HCT116 (cell line): ENCODE measurements at regions of chr16 and their contacts with region 1.

Region 1: GRCh38 chr16:12340151-12340733 is 363.7 kb downstream of the SNX29 start:
- DNase-seq: peak; percentile 55
- ATAC-seq: peak; percentile 73
- H3K4me3 ChIP-seq: no peak overlapping the region
- H3K27ac ChIP-seq: no peak overlapping the region
- H3K4me1 ChIP-seq: peaks cover 14 to 27% of the 10 kb centered on the region in 2 experiments
- H3K27me3 ChIP-seq: no peaks in the 10 kb centered on the region
- CTCF ChIP-seq: peak; percentile 57 to 77 (median 76); a peak in 5 of 6 replicates
- POLR2A ChIP-seq: no peak
- RAD21 ChIP-seq: peak; percentile 76

Region 2: DNA sequence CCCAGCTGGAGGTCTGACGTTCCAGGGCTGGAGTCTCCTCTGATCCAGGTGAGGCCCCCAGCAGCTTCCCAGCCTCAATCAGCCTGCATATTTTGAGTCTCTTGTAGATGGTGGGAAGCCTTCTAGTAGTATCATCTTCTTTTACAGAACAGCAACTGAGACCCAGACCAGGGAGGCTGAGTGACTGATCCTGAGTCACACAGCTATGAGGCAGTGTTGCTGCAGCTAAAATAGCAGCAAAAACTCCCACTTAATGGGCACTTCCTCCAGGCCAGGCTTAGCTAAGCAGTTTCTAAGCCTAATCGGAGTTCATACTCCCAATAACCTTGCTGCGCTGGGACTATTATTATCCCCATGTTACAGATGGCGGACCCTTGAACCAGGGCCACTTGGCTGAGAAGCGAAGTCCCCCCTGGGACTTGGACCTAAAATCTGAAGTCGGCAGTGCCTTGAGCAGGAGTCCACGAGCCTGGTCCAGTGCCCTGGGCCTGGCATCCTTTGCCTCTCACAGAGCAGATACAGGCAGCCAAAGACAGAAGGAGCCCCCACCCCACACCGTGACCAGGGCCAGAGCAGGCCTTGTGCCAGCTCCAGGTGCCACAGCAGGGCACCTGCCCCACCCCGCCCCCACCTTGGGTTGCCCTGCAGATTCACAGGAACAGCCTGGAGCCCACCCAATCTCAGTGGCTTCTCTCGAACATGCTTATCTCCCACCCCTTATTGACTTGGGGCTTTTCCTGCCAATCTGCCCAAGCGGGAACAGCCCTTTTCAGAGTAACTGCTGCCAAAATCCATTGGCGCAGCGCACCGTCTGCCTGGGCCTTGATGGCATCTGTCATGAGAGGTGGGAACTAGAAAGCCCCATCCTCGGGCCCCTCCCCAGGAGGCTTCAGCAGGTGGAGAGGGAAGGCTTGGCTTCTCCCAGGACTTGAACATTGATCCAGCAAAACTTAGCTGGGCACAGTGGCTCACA is 1149.4 kb before region 1 on chr16:
- CTCF ChIA-PET with region 1: no interaction called
- POLR2A ChIA-PET with region 1: no interaction called
- RAD21 ChIA-PET with region 1: no interaction called
- intact Hi-C with region 1: no loop called
- DNase-seq: no peak
- ATAC-seq: no peak
- H3K4me3 ChIP-seq: no peak overlapping the region
- H3K27ac ChIP-seq: no peak overlapping the region
- H3K4me1 ChIP-seq: peaks cover 5 to 28% of the 10 kb centered on the region in 2 experiments
- H3K27me3 ChIP-seq: no peaks in the 10 kb centered on the region
- CTCF ChIP-seq: no peak
- POLR2A ChIP-seq: no peak
- RAD21 ChIP-seq: no peak

Region 3: DNA sequence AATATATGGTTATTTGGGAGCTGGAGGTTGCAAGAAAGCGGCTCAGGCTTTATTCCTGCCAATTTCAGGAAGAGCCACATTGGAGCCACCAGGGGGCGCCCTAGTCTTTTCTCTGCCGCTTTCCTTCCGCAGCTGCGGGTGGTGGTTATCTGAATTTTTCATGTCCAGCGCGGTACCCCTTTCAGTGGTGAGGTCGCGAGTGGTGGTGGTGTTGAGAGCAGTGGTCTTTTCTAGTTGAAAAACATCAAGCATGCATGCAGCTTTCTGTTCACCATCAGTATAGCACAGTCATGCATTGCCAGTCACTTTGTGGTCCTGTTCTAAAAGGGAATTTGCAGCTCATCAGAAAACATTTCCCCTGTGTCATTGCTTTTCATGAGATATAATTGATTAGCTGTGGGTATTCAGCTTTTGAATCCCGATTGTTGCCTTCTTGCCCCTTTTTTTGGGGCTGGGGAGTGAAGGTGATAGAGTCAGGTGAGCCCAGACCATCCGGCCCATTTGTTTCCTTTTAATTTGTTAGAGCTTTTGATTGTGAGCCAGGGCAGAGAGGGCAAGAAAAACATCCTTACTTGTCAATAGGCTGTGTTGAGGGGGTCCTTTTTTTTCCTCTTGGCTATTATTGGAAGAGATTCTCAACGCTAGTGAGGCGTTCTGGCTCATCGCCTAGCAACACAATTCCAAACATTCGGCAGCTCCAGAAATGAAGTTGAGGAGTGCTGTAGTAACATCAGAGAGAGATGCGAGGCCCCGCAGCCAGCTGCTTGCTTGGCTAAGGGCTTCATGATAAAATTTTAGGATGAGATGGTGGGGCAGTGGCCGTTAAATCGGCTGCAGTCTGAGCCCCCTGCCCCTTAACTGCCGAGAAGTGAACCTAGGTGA is 244.7 kb before region 1 on chr16:
- CTCF ChIA-PET with region 1: interaction called, 9 read pairs
- POLR2A ChIA-PET with region 1: no interaction called
- RAD21 ChIA-PET with region 1: no interaction called
- intact Hi-C with region 1: loop called (anchors 10 kb)
- DNase-seq: peak; percentile 22
- ATAC-seq: peak; percentile 78
- H3K4me3 ChIP-seq: no peak overlapping the region
- H3K27ac ChIP-seq: no peak overlapping the region
- H3K4me1 ChIP-seq: peaks cover 11 to 13% of the 10 kb centered on the region in 2 experiments; a peak in 3 of 4 replicates
- H3K27me3 ChIP-seq: no peaks in the 10 kb centered on the region; the same call in 1 of the 2 replicates
- CTCF ChIP-seq: peak; percentile 69 to 92 (median 85); a peak in 5 of 6 replicates
- POLR2A ChIP-seq: no peak
- RAD21 ChIP-seq: peak; percentile 80

Region 4: GRCh38 chr16:12303653-12304052 is 36.6 kb before region 1 on chr16:
- CTCF ChIA-PET with region 1: no interaction called
- POLR2A ChIA-PET with region 1: no interaction called
- RAD21 ChIA-PET with region 1: no interaction called
- intact Hi-C with region 1: no loop called
- DNase-seq: no peak
- ATAC-seq: no peak
- H3K4me3 ChIP-seq: no peak overlapping the region
- H3K27ac ChIP-seq: no peak overlapping the region
- H3K4me1 ChIP-seq: no peaks in the 10 kb centered on the region
- H3K27me3 ChIP-seq: no peaks in the 10 kb centered on the region
- CTCF ChIP-seq: no peak
- POLR2A ChIP-seq: no peak
- RAD21 ChIP-seq: no peak

Region 5: GRCh38 chr16:12406926-12407690 is 66.9 kb after region 1 on chr16:
- CTCF ChIA-PET with region 1: no interaction called
- POLR2A ChIA-PET with region 1: no interaction called
- RAD21 ChIA-PET with region 1: no interaction called
- intact Hi-C with region 1: no loop called
- DNase-seq: no peak
- ATAC-seq: no peak
- H3K4me3 ChIP-seq: no peak overlapping the region
- H3K27ac ChIP-seq: no peak overlapping the region
- H3K4me1 ChIP-seq: peaks cover 7 to 10% of the 10 kb centered on the region in 2 experiments; a peak in 3 of 4 replicates
- H3K27me3 ChIP-seq: no peaks in the 10 kb centered on the region
- CTCF ChIP-seq: no peak
- POLR2A ChIP-seq: no peak
- RAD21 ChIP-seq: no peak

Region 6: DNA sequence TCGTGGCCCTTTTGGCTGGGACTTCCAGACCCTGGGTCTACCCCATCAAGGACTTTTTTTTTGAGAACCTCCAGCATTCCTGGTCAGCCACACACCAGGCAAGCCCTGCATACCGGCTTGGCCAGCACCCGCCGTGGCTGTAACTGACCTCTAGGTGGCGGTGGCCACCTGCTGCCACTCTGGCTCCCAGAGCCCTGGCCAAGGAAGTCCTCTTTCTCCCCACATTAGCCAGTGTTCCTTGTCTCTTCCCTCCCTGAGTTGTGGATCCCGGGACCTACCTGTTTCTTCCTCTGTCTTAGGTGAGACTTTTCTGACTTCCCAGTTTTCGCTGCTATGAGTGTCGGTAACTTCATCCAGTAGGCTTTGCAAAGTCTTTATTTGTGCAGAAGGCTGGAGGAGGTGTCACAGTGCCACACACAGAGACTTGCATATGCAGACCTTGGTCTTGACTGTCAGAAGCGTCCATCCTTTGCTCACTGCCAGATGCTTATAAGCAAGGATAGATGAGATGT is 115.1 kb after region 1 on chr16:
- CTCF ChIA-PET with region 1: no interaction called
- POLR2A ChIA-PET with region 1: no interaction called
- RAD21 ChIA-PET with region 1: no interaction called
- intact Hi-C with region 1: loop called (anchors 10 kb)
- DNase-seq: peak; percentile 6
- ATAC-seq: peak; percentile 99
- H3K4me3 ChIP-seq: no peak overlapping the region
- H3K27ac ChIP-seq: no peak overlapping the region
- H3K4me1 ChIP-seq: no peaks in the 10 kb centered on the region
- H3K27me3 ChIP-seq: no peaks in the 10 kb centered on the region
- CTCF ChIP-seq: peak; percentile 65 to 93 (median 87); a peak in 5 of 6 replicates
- POLR2A ChIP-seq: no peak
- RAD21 ChIP-seq: peak; percentile 85

Region 7: DNA sequence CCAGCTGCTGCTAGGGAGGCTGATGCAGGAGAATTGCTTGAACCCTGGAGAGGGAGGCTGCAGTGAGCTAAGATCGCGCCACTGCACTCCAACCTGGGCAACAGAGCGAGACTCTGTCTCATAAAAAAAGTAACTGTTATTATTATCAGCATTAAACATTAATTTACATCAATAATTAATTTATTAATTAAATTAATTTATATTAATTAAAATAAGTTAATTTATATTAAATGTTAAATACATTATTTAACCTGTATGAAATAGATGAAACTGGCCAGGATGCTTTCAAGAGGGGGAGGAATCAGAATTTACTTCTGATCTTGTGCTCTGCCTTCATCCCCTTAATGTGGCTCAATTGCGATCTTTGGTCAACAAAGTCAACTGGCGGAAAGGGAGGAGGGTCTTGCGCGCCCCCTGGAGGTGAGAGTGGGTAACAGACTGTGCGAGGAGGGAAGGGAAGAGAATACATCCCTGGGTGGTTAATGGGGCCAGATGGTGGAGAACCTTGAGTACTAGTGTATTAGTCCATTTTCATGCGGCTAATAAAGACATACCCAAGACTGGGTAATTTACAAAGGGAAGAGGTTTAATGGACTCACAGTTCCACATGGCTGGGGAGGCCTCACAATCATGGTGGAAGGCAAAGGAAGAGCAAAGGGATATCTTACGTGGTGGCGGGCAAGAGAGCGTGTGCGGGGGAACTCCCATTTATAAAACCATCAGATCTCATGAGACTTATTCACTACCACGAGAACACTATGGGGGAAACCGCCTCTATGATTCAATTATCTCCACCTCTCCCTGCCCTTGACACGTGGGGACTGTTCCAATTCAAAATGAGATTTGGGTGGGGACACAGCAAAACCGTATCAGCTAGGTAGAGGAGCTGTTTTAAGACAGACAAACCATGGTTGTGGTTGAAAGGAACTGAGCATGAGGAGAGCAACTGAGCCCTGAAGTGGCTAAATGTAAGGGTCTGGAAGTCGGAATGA is 479.2 kb after region 1 on chr16:
- CTCF ChIA-PET with region 1: no interaction called
- POLR2A ChIA-PET with region 1: no interaction called
- RAD21 ChIA-PET with region 1: no interaction called
- intact Hi-C with region 1: loop called (anchors 2 kb)
- DNase-seq: peak; percentile 50
- ATAC-seq: peak; percentile 96
- H3K4me3 ChIP-seq: no peak overlapping the region
- H3K27ac ChIP-seq: no peak overlapping the region
- H3K4me1 ChIP-seq: no peaks in the 10 kb centered on the region
- H3K27me3 ChIP-seq: no peaks in the 10 kb centered on the region; the same call in 1 of the 2 replicates
- CTCF ChIP-seq: peak; percentile 73 to 93 (median 90)
- POLR2A ChIP-seq: no peak
- RAD21 ChIP-seq: peak; percentile 86

Region 8: DNA sequence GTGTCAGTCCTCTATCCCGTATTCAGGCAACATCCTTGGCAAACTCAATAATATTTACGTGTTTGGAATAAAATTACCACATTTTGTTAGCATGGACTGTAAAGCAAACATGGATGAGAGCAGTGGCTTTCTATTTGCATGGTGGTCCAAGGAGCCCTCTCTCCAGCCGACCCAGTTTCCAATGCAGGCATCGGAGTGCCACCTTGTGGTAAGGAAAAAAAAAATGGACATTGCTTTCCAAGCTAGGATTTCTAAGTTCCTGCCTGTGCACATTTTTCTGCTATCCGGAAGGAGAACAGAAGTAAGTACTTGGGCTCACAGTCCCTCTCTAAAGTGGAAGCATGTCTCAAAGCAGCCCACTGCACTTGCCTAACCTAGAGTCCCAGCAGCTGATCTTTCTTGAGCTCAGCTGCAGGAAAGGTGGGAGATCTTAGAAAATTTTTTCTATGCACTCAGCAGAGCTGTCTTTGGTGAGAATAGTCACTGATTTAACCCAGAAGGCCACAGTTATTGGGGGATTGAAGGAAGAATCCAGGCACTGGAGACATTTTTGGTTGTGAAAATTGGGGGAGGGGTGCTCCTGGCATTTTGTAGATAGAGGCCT is 1533.7 kb after region 1 on chr16:
- CTCF ChIA-PET with region 1: no interaction called
- POLR2A ChIA-PET with region 1: no interaction called
- RAD21 ChIA-PET with region 1: no interaction called
- intact Hi-C with region 1: loop called (anchors 5 kb)
- DNase-seq: peak; percentile 28
- ATAC-seq: peak; percentile 83
- H3K4me3 ChIP-seq: no peak overlapping the region
- H3K27ac ChIP-seq: no peak overlapping the region
- H3K4me1 ChIP-seq: no peaks in the 10 kb centered on the region
- H3K27me3 ChIP-seq: no peaks in the 10 kb centered on the region
- CTCF ChIP-seq: peak; percentile 48 to 77 (median 66); a peak in 5 of 6 replicates
- POLR2A ChIP-seq: no peak
- RAD21 ChIP-seq: peak; percentile 69